B cell (primary cell): ENCODE measurements at regions of chr22 and their contacts with region 1.

Region 1: GRCh38 chr22:33920927-33921524 is 750 bp upstream of the LARGE1 start:
- DNase-seq: peak; percentile 97
- ATAC-seq: peak; percentile 87
- H3K4me3 ChIP-seq: peak overlapping the region; percentile 34 to 89 (median 70)
- H3K4me3 Mint-ChIP-seq: peak overlapping the region; percentile 92
- H3K27ac ChIP-seq: no peak overlapping the region
- H3K27ac Mint-ChIP-seq: peak overlapping the region; percentile 72
- H3K4me1 ChIP-seq: peaks cover 41 to 45% of the 10 kb centered on the region in 2 donors
- H3K4me1 Mint-ChIP-seq: peaks cover 48% of the 10 kb centered on the region
- H3K27me3 ChIP-seq: peaks cover 0 to 22% (median 3%) of the 10 kb centered on the region in 4 experiments
- H3K27me3 Mint-ChIP-seq: no peaks in the 10 kb centered on the region
- CTCF ChIP-seq: no peak

Region 2: DNA sequence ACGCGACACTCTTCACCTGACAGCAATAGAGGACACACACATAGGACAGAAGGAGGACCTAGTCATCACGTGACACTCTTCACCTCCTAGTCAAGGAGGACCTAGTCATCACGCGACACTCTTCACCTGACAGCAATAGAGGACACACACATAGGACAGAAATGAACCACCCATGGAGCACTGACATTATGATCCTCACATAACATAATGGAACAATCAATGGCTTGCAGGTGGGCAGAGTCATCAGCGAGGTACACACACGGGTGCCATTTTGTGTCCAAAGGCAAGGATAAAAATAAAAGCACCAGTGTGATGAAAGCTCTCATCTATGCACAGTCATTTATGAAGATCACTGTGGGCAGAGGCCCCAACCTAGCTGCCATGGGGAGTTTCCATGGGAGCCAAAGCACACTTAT is 355.4 kb before region 1 on chr22:
- CTCF ChIA-PET with region 1: interaction called, 4 read pairs
- POLR2A ChIA-PET with region 1: interaction called, 4 read pairs
- intact Hi-C with region 1: loop called (anchors 1 kb)
- DNase-seq: no peak
- ATAC-seq: no peak
- H3K4me3 ChIP-seq: no peak overlapping the region
- H3K4me3 Mint-ChIP-seq: peak overlapping the region; percentile 18
- H3K27ac ChIP-seq: no peak overlapping the region
- H3K27ac Mint-ChIP-seq: peak overlapping the region; percentile 67
- H3K4me1 ChIP-seq: peaks cover 70 to 73% of the 10 kb centered on the region in 2 donors
- H3K4me1 Mint-ChIP-seq: peaks cover 72% of the 10 kb centered on the region
- H3K27me3 ChIP-seq: no peaks in the 10 kb centered on the region
- H3K27me3 Mint-ChIP-seq: no peaks in the 10 kb centered on the region
- CTCF ChIP-seq: no peak

Region 3: DNA sequence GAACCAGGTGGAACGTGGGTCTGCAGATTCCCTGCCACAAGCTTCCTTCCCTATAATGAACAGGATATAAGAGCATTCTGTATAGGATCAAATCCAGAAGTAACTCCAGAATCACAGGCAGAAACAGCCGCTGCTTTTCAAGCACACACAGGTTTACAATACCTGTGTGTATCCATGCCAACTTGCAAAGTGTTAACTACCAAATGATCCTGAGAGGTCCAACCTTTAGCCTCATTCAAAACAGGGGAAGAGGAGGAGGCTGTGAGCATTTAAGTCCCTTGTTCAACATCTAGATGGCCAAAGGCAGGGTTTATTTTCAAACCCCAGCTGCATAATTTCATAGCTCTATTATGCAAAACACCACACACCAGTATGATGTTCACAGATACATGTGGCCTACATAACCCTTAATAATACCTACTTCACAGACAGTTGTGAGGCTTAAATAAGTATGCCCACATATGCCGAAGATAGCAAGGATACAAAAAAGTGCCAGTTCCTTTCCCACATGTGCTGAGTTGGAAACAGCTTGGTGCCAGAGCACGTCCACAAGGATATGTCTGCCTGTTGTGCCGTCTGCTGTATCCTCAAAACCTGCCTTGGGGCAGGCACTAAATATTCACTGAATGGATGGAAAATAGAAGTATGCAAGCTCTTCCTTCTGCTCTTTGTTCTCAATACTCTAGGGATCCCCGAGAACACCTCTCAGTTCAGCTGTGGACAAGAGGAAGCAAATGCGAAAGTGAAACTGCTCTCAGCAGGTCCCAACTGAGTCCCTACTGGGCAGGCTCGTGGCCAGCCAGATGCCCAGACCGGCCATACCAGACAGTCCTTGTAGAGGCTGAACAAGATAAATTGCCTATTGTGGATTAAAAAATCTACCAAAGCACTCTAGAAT is 67.6 kb before region 1 on chr22:
- CTCF ChIA-PET with region 1: interaction called, 3 read pairs
- POLR2A ChIA-PET with region 1: no interaction called
- intact Hi-C with region 1: loop called (anchors 2 kb)
- DNase-seq: peak; percentile 71
- ATAC-seq: peak; percentile 94
- H3K4me3 ChIP-seq: peak overlapping the region in 3 of 5 experiments; percentile 38 to 62 (median 49)
- H3K4me3 Mint-ChIP-seq: peak overlapping the region; percentile 87
- H3K27ac ChIP-seq: peak overlapping the region; percentile 2 to 64
- H3K27ac Mint-ChIP-seq: peak overlapping the region; percentile 78
- H3K4me1 ChIP-seq: peaks cover 20 to 29% of the 10 kb centered on the region in 2 donors
- H3K4me1 Mint-ChIP-seq: peaks cover 31% of the 10 kb centered on the region
- H3K27me3 ChIP-seq: no peaks in the 10 kb centered on the region
- H3K27me3 Mint-ChIP-seq: no peaks in the 10 kb centered on the region
- CTCF ChIP-seq: no peak

Region 4: DNA sequence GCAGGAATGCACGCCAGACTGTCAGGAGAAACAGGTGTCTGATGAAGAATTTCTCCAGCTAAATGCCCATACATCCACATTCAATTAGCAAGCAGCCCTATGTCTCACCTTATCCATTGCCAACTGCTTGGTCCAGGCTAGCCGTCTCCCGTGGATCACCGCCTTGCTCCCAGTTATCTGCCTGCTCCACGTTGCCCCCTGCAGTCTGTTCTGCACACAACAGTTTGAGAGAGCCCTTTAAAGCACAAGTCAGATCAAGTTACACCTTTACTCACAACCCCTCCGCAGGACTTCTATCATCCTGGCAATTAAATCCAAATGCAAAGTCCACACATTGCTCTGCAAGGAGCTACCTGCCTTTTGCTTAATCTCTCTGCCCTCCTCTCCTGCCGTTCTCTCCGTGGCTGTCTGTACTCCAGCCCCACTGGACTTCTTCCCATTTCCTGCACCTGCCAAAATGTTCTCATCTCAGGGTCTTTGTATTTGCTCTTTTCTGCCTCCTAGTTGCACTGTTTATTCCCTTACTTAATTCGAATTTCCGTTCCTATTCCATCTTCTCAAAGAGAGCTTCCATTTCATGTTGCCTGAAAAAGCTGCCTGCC is 184.5 kb after region 1 on chr22:
- CTCF ChIA-PET with region 1: interaction called, 68 read pairs
- POLR2A ChIA-PET with region 1: no interaction called
- intact Hi-C with region 1: no loop called
- DNase-seq: peak; percentile 39
- ATAC-seq: peak; percentile 43
- H3K4me3 ChIP-seq: no peak overlapping the region
- H3K4me3 Mint-ChIP-seq: no peak overlapping the region
- H3K27ac ChIP-seq: no peak overlapping the region
- H3K27ac Mint-ChIP-seq: no peak overlapping the region
- H3K4me1 ChIP-seq: no peaks in the 10 kb centered on the region
- H3K4me1 Mint-ChIP-seq: peaks cover 2% of the 10 kb centered on the region
- H3K27me3 ChIP-seq: peaks cover 0 to 5% (median 1%) of the 10 kb centered on the region in 4 experiments
- H3K27me3 Mint-ChIP-seq: peaks cover 25% of the 10 kb centered on the region
- CTCF ChIP-seq: peak; percentile 66